ENCODE measurements at regions of chr1 and their contacts with region 1.

Region 1: GRCh38 chr1:13730751-13731482 is 30.9 kb downstream of the PRDM2 start:
- DNase-seq: peak; percentile 97
- ATAC-seq: peak; percentile 88
- H3K4me3 ChIP-seq: peak overlapping the region; percentile 12 to 51 (median 34)
- H3K4me3 Mint-ChIP-seq: peak overlapping the region; percentile 81
- H3K27ac ChIP-seq: peak overlapping the region; percentile 98 to 99
- H3K27ac Mint-ChIP-seq: peak overlapping the region; percentile 93
- H3K4me1 ChIP-seq: peaks cover 84 to 95% of the 10 kb centered on the region in 2 donors
- H3K4me1 Mint-ChIP-seq: peaks cover 96% of the 10 kb centered on the region
- H3K27me3 ChIP-seq: no peaks in the 10 kb centered on the region
- H3K27me3 Mint-ChIP-seq: no peaks in the 10 kb centered on the region
- CTCF ChIP-seq: peak; percentile 31

Region 2: DNA sequence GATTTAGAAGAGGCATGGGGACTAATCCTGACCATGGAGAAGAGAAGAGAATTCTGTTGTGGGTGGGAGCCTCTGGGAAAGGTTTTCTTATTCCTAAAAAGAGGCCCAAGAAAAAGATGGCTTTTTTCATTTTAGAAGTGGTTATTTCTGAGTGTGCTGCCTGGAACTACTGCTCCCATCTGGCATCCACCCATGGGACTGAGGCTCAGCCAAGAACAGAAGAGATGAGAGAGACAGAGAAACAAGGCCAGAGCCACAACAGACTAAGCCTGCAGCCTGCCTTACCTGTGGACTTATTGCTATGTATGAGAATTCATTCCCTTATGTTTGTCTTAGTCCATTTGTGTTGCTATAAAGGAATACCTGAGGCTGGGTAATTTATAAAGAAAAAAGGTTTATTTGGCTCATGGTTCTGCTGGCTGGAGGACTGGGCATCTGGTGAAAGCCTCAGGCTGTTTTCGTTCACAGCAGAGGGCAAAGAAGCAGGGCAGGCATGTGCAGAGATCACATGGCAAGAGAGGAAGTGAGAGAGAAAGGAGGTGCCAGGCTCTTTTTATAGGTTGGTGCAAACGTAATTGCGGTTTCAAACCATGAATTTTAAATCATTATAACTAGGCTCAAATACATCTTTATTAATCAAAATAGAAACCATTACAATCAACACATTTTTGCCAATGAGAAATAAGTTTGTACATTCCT is 88.5 kb before region 1 on chr1:
- CTCF ChIA-PET with region 1: no interaction called
- POLR2A ChIA-PET with region 1: no interaction called
- intact Hi-C with region 1: loop called (anchors 1 kb)
- DNase-seq: peak; percentile 80
- ATAC-seq: peak; percentile 90
- H3K4me3 ChIP-seq: peak overlapping the region in 1 of 5 experiments; percentile 1
- H3K4me3 Mint-ChIP-seq: peak overlapping the region; percentile 83
- H3K27ac ChIP-seq: peak overlapping the region; percentile 44 to 77
- H3K27ac Mint-ChIP-seq: peak overlapping the region; percentile 88
- H3K4me1 ChIP-seq: peaks cover 18 to 19% of the 10 kb centered on the region in 2 donors
- H3K4me1 Mint-ChIP-seq: peaks cover 36% of the 10 kb centered on the region
- H3K27me3 ChIP-seq: peaks cover 0 to 2% (median 0%) of the 10 kb centered on the region in 4 experiments
- H3K27me3 Mint-ChIP-seq: no peaks in the 10 kb centered on the region
- CTCF ChIP-seq: no peak

Region 3: GRCh38 chr1:13714851-13715250 is 16.1 kb before region 1 on chr1:
- CTCF ChIA-PET with region 1: interaction called, 339 read pairs
- POLR2A ChIA-PET with region 1: interaction called, 10 read pairs
- intact Hi-C with region 1: loop called (anchors 1 kb)
- DNase-seq: no peak
- ATAC-seq: no peak
- H3K4me3 ChIP-seq: no peak overlapping the region
- H3K4me3 Mint-ChIP-seq: peak overlapping the region; percentile 13
- H3K27ac ChIP-seq: peak overlapping the region in 1 of 2 donors; percentile 86
- H3K27ac Mint-ChIP-seq: peak overlapping the region; percentile 27
- H3K4me1 ChIP-seq: peaks cover 36 to 38% of the 10 kb centered on the region in 2 donors
- H3K4me1 Mint-ChIP-seq: peaks cover 67% of the 10 kb centered on the region
- H3K27me3 ChIP-seq: no peaks in the 10 kb centered on the region
- H3K27me3 Mint-ChIP-seq: no peaks in the 10 kb centered on the region
- CTCF ChIP-seq: peak; percentile 65

Region 4: DNA sequence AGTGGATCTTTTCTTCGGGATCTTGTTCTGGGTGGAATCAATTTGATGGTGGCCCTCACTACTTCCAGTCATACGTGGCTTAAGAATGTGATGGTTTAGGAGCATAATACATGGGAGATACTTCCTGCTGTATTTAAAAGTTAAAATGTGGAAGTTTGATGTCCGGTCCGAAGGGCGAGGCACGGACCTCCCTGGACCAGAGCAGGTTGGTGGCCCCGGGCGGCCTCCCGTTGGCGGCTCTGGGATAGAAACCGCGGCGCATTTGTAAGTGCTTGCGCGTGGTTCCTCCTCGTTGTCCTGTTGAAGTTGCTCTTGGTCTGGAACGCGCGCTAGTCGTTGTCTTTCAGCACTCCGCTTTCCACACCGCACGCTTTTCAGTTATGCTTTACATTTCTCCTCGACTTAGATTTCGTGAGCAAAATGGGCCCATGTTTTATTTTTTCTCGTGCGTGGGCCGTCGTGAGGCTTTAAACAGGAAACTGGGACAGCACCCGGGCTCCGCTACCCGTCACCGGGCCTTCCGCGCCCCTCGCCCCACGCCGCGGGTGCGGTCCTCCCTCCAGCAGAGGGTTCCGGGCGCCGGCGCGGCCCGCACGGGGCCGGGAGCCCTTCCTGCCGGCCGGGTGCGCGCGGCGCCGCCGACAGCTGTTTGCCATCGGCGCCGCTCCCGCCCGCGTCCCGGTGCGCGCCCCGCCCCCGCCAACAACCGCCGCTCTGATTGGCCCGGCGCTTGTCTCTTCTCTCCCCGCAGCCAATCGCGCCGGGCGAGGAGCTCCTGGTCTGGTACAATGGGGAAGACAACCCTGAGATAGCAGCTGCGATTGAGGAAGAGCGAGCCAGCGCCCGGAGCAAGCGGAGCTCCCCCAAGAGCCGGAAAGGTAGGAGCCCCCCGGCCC is 17.9 kb after region 1 on chr1:
- CTCF ChIA-PET with region 1: interaction called, 48 read pairs
- POLR2A ChIA-PET with region 1: interaction called, 17 read pairs
- intact Hi-C with region 1: loop called (anchors 1 kb)
- DNase-seq: peak; percentile 97
- ATAC-seq: peak; percentile 90
- H3K4me3 ChIP-seq: peak overlapping the region; percentile 59 to 81 (median 72)
- H3K4me3 Mint-ChIP-seq: peak overlapping the region; percentile 95
- H3K27ac ChIP-seq: peak overlapping the region; percentile 86 to 90
- H3K27ac Mint-ChIP-seq: peak overlapping the region; percentile 98
- H3K4me1 ChIP-seq: peaks cover 38 to 42% of the 10 kb centered on the region in 2 donors
- H3K4me1 Mint-ChIP-seq: peaks cover 59% of the 10 kb centered on the region
- H3K27me3 ChIP-seq: no peaks in the 10 kb centered on the region
- H3K27me3 Mint-ChIP-seq: no peaks in the 10 kb centered on the region
- CTCF ChIP-seq: peak; percentile 23

Measured in B cell (primary cell).